ENCODE measurements at regions of chr10 and their contacts with region 1.

Region 1: GRCh38 chr10:36779234-36779846 is 346.1 kb upstream of the ANKRD30A start:
- DNase-seq: peak in 2 of 5 donors; percentile 19 to 26
- ATAC-seq: peak; percentile 88 to 92 (median 92)
- H3K4me3 ChIP-seq: no peak overlapping the region
- H3K27ac ChIP-seq: no peak overlapping the region
- H3K4me1 ChIP-seq: peaks cover 0 to 7% (median 0%) of the 10 kb centered on the region in 12 donors
- H3K27me3 ChIP-seq: no peaks in the 10 kb centered on the region
- CTCF ChIP-seq: peak; percentile 51 to 86 (median 74)
- POLR2A ChIP-seq: no peak

Region 2: GRCh38 chr10:35236739-35237138 is 1542.6 kb before region 1 on chr10:
- intact Hi-C with region 1: loop called in 1 of 10 experiments (anchors 10 kb)
- DNase-seq: no peak
- ATAC-seq: no peak
- H3K4me3 ChIP-seq: no peak overlapping the region
- H3K27ac ChIP-seq: no peak overlapping the region
- H3K4me1 ChIP-seq: no peaks in the 10 kb centered on the region
- H3K27me3 ChIP-seq: no peaks in the 10 kb centered on the region
- CTCF ChIP-seq: peak in 10 of 12 donors; percentile 19 to 50 (median 38)
- POLR2A ChIP-seq: no peak

Region 3: GRCh38 chr10:36880898-36881297 is 101.6 kb after region 1 on chr10:
- intact Hi-C with region 1: loop called in 2 of 10 experiments (anchors 5 to 10 kb)
- DNase-seq: no peak
- ATAC-seq: peak in 1 of 4 donors; percentile 46
- H3K4me3 ChIP-seq: no peak overlapping the region
- H3K27ac ChIP-seq: no peak overlapping the region
- H3K4me1 ChIP-seq: no peaks in the 10 kb centered on the region
- H3K27me3 ChIP-seq: peaks cover 0 to 8% (median 0%) of the 10 kb centered on the region in 9 donors
- CTCF ChIP-seq: peak in 11 of 12 donors; percentile 23 to 62 (median 44)
- POLR2A ChIP-seq: no peak

Measured in heart left ventricle (tissue), 16 donors.